ENCODE measurements at regions of chr9 and their contacts with region 1.

Region 1: GRCh38 chr9:22452415-22453010 is 5.9 kb downstream of the DMRTA1 start:
- H3K4me3 ChIP-seq: no peak overlapping the region
- H3K27ac ChIP-seq: no peak overlapping the region
- H3K4me1 ChIP-seq: no peaks in the 10 kb centered on the region
- CTCF ChIP-seq: no peak

Region 2: DNA sequence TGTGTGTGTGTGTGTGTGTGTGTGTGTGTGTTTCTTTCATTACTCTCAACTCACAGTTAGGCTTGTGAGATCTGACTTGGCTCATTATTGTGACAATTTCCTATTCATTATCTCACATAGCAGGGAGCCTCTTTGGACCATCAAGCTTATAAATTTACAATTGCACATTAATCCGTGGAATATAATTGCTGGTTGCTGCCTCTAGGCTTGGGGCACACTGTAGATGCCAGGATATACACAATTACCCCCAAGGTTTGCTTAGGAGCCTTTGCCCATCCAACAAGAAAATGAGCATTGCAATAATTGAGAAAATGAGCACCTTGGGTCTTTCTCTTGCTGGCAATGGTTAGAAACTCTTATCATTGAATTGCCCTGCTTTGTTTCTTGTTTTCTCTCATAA is 167.4 kb before region 1 on chr9:
- CTCF ChIA-PET with region 1: no interaction called
- POLR2A ChIA-PET with region 1: no interaction called
- H3K4me3 ChIP-seq: no peak overlapping the region
- H3K27ac ChIP-seq: no peak overlapping the region
- H3K4me1 ChIP-seq: no peaks in the 10 kb centered on the region
- CTCF ChIP-seq: no peak

Region 3: GRCh38 chr9:22307013-22307711 is 145.4 kb before region 1 on chr9:
- CTCF ChIA-PET with region 1: interaction called, 183 read pairs
- POLR2A ChIA-PET with region 1: interaction called, 3 read pairs
- H3K4me3 ChIP-seq: no peak overlapping the region
- H3K27ac ChIP-seq: no peak overlapping the region
- H3K4me1 ChIP-seq: no peaks in the 10 kb centered on the region
- CTCF ChIP-seq: peak; percentile 42; the same call in 1 of the 2 replicates

Region 4: DNA sequence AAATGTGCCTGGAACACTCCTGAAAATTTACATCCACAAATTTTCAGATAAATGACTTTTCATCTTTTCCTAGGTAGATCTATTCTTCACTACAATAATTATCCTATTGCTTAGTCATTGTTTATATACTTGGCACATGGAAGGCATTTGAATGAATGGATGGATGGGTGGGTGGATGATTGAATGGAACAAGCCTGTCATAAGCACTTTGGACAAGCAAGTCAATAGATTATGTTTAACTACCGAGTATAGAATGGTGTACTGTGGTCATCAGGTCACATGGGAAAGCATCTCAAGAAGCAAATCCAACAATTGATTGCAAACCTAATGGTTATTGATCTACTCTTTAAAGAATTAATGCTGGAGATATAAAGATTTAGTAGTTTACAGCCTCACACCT is 120.3 kb before region 1 on chr9:
- CTCF ChIA-PET with region 1: interaction called, 10 read pairs
- POLR2A ChIA-PET with region 1: no interaction called
- H3K4me3 ChIP-seq: no peak overlapping the region
- H3K27ac ChIP-seq: no peak overlapping the region
- H3K4me1 ChIP-seq: no peaks in the 10 kb centered on the region
- CTCF ChIP-seq: no peak

Region 5: DNA sequence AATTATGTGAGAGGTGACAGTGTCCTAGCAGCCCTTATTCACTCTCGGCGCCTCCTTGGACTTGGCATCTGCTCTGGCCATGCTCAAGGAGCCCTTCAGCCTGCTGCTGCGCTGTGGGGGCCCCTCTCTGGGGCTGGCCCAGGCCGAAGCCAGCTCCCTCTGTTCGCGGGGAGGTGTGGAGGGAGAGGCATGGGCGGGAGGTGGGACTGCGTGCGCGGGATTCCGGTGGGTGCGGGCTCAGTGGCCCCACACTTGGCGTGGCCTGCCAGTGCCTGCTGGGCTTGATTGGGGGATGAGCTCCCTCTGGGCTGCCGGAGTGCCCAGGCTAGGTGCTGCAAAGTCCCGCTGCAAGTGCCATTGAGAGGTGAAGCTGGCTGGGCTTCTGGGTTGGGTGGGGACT is 18.8 kb before region 1 on chr9:
- CTCF ChIA-PET with region 1: no interaction called
- POLR2A ChIA-PET with region 1: no interaction called
- H3K4me3 ChIP-seq: no peak overlapping the region
- H3K27ac ChIP-seq: no peak overlapping the region
- H3K4me1 ChIP-seq: no peaks in the 10 kb centered on the region
- CTCF ChIP-seq: no peak

Region 6: GRCh38 chr9:22463205-22463604 is 10.7 kb after region 1 on chr9:
- CTCF ChIA-PET with region 1: interaction called, 23 read pairs
- POLR2A ChIA-PET with region 1: no interaction called
- H3K4me3 ChIP-seq: no peak overlapping the region
- H3K27ac ChIP-seq: no peak overlapping the region
- H3K4me1 ChIP-seq: no peaks in the 10 kb centered on the region
- CTCF ChIP-seq: no peak

Region 7: DNA sequence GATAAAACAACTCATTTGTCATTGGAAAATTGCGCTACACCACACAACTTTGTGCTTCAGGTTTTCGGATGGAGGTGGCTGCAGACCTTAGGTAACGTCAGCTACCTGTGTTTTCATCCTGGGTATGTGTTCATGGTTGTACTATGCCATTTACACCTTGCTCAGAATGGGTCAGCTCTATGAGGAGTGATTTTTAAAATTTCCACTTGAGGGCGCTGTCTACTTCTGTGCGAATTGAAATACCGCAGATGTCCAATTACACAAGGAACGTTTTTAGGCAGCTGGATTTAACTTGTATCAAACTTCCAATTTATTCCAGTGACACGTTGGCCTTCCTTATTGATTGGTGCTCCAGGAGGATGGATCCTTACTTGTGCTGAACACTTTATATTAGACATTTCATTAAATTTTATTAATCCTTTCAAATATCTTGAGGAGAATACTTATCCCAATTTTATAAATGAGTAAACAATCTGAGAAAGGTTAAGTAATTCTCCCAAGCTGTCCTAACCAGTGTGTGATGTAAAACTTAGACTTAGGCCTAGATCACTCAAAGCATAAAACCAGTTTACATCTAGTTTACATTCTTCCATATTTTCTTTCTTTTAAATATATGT is 17.5 kb after region 1 on chr9:
- CTCF ChIA-PET with region 1: interaction called, 18 read pairs
- POLR2A ChIA-PET with region 1: no interaction called
- H3K4me3 ChIP-seq: no peak overlapping the region
- H3K27ac ChIP-seq: no peak overlapping the region
- H3K4me1 ChIP-seq: no peaks in the 10 kb centered on the region
- CTCF ChIP-seq: no peak

Region 8: DNA sequence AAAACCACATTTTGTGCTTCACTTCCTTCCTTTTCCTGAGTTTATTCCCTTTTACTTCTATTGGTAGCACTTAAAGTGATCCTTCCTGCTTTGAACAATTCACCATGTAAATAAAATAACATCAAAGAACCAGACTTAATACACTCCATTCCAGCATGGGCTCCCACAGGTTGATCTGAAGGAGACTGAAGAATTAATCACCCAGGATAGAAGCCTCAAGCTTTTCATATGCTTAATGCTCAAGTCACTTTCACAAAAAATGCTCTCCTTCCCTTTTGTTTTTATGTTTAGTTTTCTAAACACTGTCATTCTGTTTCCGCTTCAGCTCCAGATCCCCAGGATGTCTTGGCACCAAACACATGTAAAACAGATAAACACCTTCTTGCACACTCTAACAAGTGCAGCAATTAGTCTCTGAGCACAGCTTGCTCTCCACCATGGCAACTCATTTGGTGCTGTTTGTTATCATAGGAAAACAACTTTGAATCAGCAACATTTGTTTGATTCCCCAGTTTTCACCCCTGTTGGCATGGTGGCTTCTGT is 31.1 kb after region 1 on chr9:
- CTCF ChIA-PET with region 1: no interaction called
- POLR2A ChIA-PET with region 1: no interaction called
- H3K4me3 ChIP-seq: no peak overlapping the region
- H3K27ac ChIP-seq: no peak overlapping the region
- H3K4me1 ChIP-seq: no peaks in the 10 kb centered on the region
- CTCF ChIP-seq: no peak